PC-9 (cell line): ENCODE measurements at regions of chrX and their contacts with region 1.

Region 1: GRCh38 chrX:37405956-37406355 is 56.8 kb downstream of the PRRG1 start:
- DNase-seq: no peak
- H3K4me3 ChIP-seq: no peak overlapping the region
- H3K27ac ChIP-seq: no peak overlapping the region
- H3K4me1 ChIP-seq: no peaks in the 10 kb centered on the region
- H3K27me3 ChIP-seq: no peaks in the 10 kb centered on the region
- CTCF ChIP-seq: no peak

Region 2: GRCh38 chrX:36534900-36535299 is 871.1 kb before region 1 on chrX:
- CTCF ChIA-PET with region 1: no interaction called
- POLR2A ChIA-PET with region 1: interaction called, 20 read pairs
- intact Hi-C with region 1: no loop called
- DNase-seq: no peak
- H3K4me3 ChIP-seq: no peak overlapping the region
- H3K27ac ChIP-seq: no peak overlapping the region
- H3K4me1 ChIP-seq: no peaks in the 10 kb centered on the region
- H3K27me3 ChIP-seq: no peaks in the 10 kb centered on the region
- CTCF ChIP-seq: no peak

Region 3: GRCh38 chrX:37349221-37350064 is 56.5 kb before region 1 on chrX and contains the start of gene PRRG1:
- CTCF ChIA-PET with region 1: no interaction called
- POLR2A ChIA-PET with region 1: interaction called, 13 read pairs
- intact Hi-C with region 1: no loop called
- DNase-seq: peak; percentile 69 to 83
- H3K4me3 ChIP-seq: peak within 1 kb of the TSS; percentile 79
- H3K27ac ChIP-seq: peak within 1 kb of the TSS; percentile 59
- H3K4me1 ChIP-seq: peaks cover 33% of the 10 kb centered on the region
- H3K27me3 ChIP-seq: no peaks in the 10 kb centered on the region
- CTCF ChIP-seq: no peak
- total RNA-seq, gene PRRG1: 23.5 and 34.4 TPM in 2 replicates